GM13976 (cell line): ENCODE measurements at regions of chr3 and their contacts with region 1.

Region 1: DNA sequence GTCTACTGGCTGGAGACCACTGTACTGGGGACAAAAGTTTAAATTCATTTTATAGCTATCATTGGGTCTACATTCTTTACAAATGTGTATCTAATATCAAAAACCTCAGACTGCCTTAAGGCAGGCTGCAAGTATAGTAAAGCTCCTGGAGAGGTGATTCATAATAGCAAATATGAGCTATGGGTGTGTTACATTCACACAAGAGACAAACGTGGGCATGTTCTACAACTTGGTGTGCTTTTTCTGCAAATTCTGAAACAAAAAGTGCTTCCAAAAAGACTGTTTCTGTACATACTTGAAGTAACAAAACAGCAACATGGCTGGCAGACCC is 1101.4 kb downstream of the ROBO1 start:
- DNase-seq: no peak
- CTCF ChIP-seq: no peak

Region 2: GRCh38 chr3:78398401-78398800 is 268.0 kb before region 1 on chr3:
- in situ Hi-C with region 1: no loop called
- DNase-seq: no peak
- CTCF ChIP-seq: no peak

Region 3: GRCh38 chr3:79040701-79041100 is 374.3 kb after region 1 on chr3:
- in situ Hi-C with region 1: loop called (anchors 10 kb)
- DNase-seq: no peak
- CTCF ChIP-seq: no peak